ENCODE measurements at regions of chr20 and their contacts with region 1.

Region 1: DNA sequence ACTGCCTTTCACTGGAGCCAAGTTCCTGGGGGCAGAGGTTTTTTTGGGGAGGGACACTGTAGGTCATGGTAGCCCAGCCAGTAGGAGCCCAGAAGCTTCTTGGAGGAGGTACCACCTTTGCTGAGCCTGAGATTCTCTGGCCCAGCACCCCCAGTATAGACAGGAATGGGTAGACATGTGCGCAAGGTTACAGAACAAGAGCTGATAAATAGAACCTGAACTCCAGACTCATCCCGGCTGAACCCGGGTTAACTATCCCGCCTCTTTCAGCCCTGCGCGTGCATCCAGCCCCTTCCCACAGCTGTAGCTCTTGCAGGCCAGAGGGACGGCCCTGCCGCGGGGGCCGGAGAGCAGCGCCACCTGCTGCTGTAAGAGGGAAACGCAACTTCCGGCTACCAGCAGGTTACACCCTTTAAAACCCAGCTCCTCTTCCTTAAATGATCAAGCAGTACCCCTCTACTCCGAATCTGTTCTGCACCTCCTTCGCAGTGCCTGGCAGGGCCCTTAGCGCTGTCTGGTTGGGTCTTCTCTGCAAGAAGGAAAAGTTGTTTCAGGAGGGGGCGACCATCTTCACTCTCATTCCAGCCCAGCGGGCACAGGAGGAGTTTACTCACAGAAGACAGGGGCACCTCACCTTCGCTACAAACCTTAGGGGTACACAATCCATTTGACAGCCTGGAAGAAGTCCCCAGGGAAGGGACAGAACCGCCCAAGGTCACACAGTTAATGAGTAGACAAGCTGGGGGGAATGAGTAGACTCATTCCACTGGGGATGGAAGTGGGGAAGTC is 7.5 kb downstream of the SRXN1 start:
- DNase-seq: peak; percentile 80
- H3K4me3 ChIP-seq: no peak overlapping the region
- H3K27ac ChIP-seq: no peak overlapping the region
- H3K4me1 ChIP-seq: no peaks in the 10 kb centered on the region
- H3K27me3 ChIP-seq: no peaks in the 10 kb centered on the region
- CTCF ChIP-seq: peak; percentile 94 to 98
- POLR2A ChIP-seq: peak; percentile 38

Region 2: GRCh38 chr20:235891-236290 is 409.6 kb before region 1 on chr20:
- CTCF ChIA-PET with region 1: no interaction called
- POLR2A ChIA-PET with region 1: no interaction called
- dilution Hi-C with region 1: no loop called
- intact Hi-C with region 1: no loop called
- DNase-seq: peak; percentile 16
- H3K4me3 ChIP-seq: no peak overlapping the region
- H3K27ac ChIP-seq: no peak overlapping the region
- H3K4me1 ChIP-seq: no peaks in the 10 kb centered on the region
- H3K27me3 ChIP-seq: peaks cover 0 to 4% of the 10 kb centered on the region in 2 experiments
- CTCF ChIP-seq: peak in 1 of 2 donors; percentile 21
- POLR2A ChIP-seq: no peak

Region 3: GRCh38 chr20:354298-355064 is 291.0 kb before region 1 on chr20:
- CTCF ChIA-PET with region 1: interaction called, 3 read pairs
- POLR2A ChIA-PET with region 1: no interaction called
- dilution Hi-C with region 1: no loop called
- intact Hi-C with region 1: loop called (anchors 1 kb)
- DNase-seq: peak; percentile 76
- H3K4me3 ChIP-seq: no peak overlapping the region
- H3K27ac ChIP-seq: no peak overlapping the region
- H3K4me1 ChIP-seq: no peaks in the 10 kb centered on the region
- H3K27me3 ChIP-seq: no peaks in the 10 kb centered on the region
- CTCF ChIP-seq: peak; percentile 89 to 94
- POLR2A ChIP-seq: no peak

Region 4: GRCh38 chr20:561437-562231 is 83.9 kb before region 1 on chr20:
- CTCF ChIA-PET with region 1: interaction called, 298 read pairs
- POLR2A ChIA-PET with region 1: no interaction called
- dilution Hi-C with region 1: no loop called
- intact Hi-C with region 1: loop called (anchors 1 kb)
- DNase-seq: peak; percentile 79
- H3K4me3 ChIP-seq: no peak overlapping the region
- H3K27ac ChIP-seq: no peak overlapping the region
- H3K4me1 ChIP-seq: no peaks in the 10 kb centered on the region
- H3K27me3 ChIP-seq: peaks cover 0 to 9% of the 10 kb centered on the region in 2 experiments
- CTCF ChIP-seq: peak; percentile 95
- POLR2A ChIP-seq: no peak

Region 5: GRCh38 chr20:595330-596308 is 49.9 kb before region 1 on chr20:
- CTCF ChIA-PET with region 1: interaction called, 11 read pairs
- POLR2A ChIA-PET with region 1: no interaction called
- dilution Hi-C with region 1: no loop called
- intact Hi-C with region 1: no loop called
- DNase-seq: peak; percentile 55
- H3K4me3 ChIP-seq: no peak overlapping the region
- H3K27ac ChIP-seq: no peak overlapping the region
- H3K4me1 ChIP-seq: peaks cover 2% of the 10 kb centered on the region
- H3K27me3 ChIP-seq: peaks cover 0 to 1% of the 10 kb centered on the region in 2 experiments
- CTCF ChIP-seq: peak in 1 of 2 donors; percentile 6
- POLR2A ChIP-seq: no peak

Region 6: GRCh38 chr20:625360-625932 is 20.1 kb before region 1 on chr20:
- CTCF ChIA-PET with region 1: interaction called, 11 read pairs
- POLR2A ChIA-PET with region 1: no interaction called
- dilution Hi-C with region 1: no loop called
- intact Hi-C with region 1: no loop called
- DNase-seq: peak; percentile 35
- H3K4me3 ChIP-seq: no peak overlapping the region
- H3K27ac ChIP-seq: no peak overlapping the region
- H3K4me1 ChIP-seq: no peaks in the 10 kb centered on the region
- H3K27me3 ChIP-seq: peaks cover 2 to 10% of the 10 kb centered on the region in 2 experiments
- CTCF ChIP-seq: no peak
- POLR2A ChIP-seq: no peak

Region 7: DNA sequence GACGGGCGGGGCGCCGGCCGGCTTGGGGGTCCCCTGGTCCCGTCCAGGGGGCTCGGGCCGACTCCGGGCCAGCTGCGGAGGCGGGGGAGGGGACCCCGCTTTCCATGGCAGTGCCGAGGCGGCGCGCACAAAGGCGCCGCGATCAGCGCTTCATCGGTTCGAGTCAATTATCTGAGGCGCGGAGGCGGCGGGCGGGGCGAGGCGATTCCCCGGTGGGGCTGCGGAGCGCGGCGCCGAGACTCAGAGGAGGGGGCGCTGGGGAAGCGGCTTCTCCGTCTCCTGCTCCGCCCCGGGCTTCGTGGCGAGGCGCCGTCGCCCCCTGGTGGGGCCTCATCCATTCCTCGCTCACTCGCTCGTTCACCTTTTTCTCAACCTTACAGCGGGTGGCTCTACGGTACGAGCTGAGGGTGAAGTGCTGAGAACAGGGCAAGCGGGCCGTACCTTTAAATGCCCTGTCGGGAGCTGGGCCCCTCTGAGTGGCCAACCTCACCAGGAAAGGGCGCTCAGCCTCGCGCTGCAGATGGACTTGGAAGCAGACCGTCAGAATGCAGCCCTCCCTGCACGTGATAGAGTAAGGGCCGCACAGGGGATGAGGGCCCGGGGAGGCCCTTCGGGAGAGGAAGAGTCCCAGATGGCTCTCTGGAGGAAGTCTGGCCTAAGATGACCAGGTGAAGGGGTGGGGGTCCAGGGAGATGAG is 82.9 kb after region 1 on chr20:
- CTCF ChIA-PET with region 1: interaction called, 6 read pairs
- POLR2A ChIA-PET with region 1: no interaction called
- dilution Hi-C with region 1: no loop called
- intact Hi-C with region 1: loop called (anchors 1 kb)
- DNase-seq: peak; percentile 48
- H3K4me3 ChIP-seq: peak overlapping the region in 1 of 3 experiments; percentile 24
- H3K27ac ChIP-seq: no peak overlapping the region
- H3K4me1 ChIP-seq: no peaks in the 10 kb centered on the region
- H3K27me3 ChIP-seq: peaks cover 25 to 29% of the 10 kb centered on the region in 2 experiments
- CTCF ChIP-seq: peak; percentile 46 to 85
- POLR2A ChIP-seq: no peak

Measured in endothelial cell of umbilical vein (primary cell).